ENCODE measurements at regions of chr15 and their contacts with region 1.

Region 1: GRCh38 chr15:20386198-20386597 is 155.4 kb downstream of the GOLGA6L6 start:
- DNase-seq: no peak
- ATAC-seq: no peak
- H3K4me3 Mint-ChIP-seq: no peak overlapping the region
- H3K27ac Mint-ChIP-seq: no peak overlapping the region
- H3K4me1 Mint-ChIP-seq: no peaks in the 10 kb centered on the region
- H3K27me3 Mint-ChIP-seq: no peaks in the 10 kb centered on the region
- CTCF ChIP-seq: no peak

Region 2: GRCh38 chr15:20340931-20341661 is 45.1 kb before region 1 on chr15:
- CTCF ChIA-PET with region 1: no interaction called
- POLR2A ChIA-PET with region 1: no interaction called
- intact Hi-C with region 1: no loop called
- DNase-seq: peak; percentile 7
- ATAC-seq: no peak
- H3K4me3 Mint-ChIP-seq: no peak overlapping the region
- H3K27ac Mint-ChIP-seq: no peak overlapping the region
- H3K4me1 Mint-ChIP-seq: no peaks in the 10 kb centered on the region
- H3K27me3 Mint-ChIP-seq: no peaks in the 10 kb centered on the region
- CTCF ChIP-seq: no peak

Region 3: DNA sequence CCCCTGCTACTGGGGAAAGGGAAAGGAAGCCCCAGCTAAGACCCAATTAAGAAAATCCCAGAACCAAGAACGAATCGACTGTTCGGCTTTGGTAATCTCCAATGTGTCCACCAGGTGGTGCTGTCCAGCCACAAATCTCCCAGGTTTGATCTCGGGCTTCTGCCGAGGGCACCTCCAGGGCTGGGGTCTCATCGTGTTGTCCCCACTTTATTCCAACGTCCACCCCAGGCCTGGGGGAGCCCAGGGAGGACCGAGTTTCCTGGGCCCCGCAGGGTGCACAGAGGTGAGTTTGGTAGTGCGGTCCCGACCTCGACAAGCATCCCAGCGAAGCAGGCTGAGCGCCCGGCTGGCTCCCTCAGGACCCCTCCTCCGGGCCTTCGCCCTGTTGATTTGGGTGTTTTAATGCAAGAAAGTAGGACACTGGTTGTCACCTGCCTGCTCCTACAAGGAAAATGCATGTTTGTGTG is 29.7 kb before region 1 on chr15:
- CTCF ChIA-PET with region 1: no interaction called
- POLR2A ChIA-PET with region 1: no interaction called
- intact Hi-C with region 1: no loop called
- DNase-seq: peak; percentile 83
- ATAC-seq: peak; percentile 59
- H3K4me3 Mint-ChIP-seq: no peak overlapping the region
- H3K27ac Mint-ChIP-seq: no peak overlapping the region
- H3K4me1 Mint-ChIP-seq: peaks cover 7% of the 10 kb centered on the region
- H3K27me3 Mint-ChIP-seq: no peaks in the 10 kb centered on the region
- CTCF ChIP-seq: peak; percentile 94

Region 4: GRCh38 chr15:20367093-20367492 is 19.1 kb before region 1 on chr15:
- CTCF ChIA-PET with region 1: no interaction called
- POLR2A ChIA-PET with region 1: no interaction called
- intact Hi-C with region 1: loop called (anchors 2 kb)
- DNase-seq: no peak
- ATAC-seq: no peak
- H3K4me3 Mint-ChIP-seq: no peak overlapping the region
- H3K27ac Mint-ChIP-seq: no peak overlapping the region
- H3K4me1 Mint-ChIP-seq: no peaks in the 10 kb centered on the region
- H3K27me3 Mint-ChIP-seq: no peaks in the 10 kb centered on the region
- CTCF ChIP-seq: no peak